ENCODE measurements at regions of chr4 and their contacts with region 1.

Region 1: DNA sequence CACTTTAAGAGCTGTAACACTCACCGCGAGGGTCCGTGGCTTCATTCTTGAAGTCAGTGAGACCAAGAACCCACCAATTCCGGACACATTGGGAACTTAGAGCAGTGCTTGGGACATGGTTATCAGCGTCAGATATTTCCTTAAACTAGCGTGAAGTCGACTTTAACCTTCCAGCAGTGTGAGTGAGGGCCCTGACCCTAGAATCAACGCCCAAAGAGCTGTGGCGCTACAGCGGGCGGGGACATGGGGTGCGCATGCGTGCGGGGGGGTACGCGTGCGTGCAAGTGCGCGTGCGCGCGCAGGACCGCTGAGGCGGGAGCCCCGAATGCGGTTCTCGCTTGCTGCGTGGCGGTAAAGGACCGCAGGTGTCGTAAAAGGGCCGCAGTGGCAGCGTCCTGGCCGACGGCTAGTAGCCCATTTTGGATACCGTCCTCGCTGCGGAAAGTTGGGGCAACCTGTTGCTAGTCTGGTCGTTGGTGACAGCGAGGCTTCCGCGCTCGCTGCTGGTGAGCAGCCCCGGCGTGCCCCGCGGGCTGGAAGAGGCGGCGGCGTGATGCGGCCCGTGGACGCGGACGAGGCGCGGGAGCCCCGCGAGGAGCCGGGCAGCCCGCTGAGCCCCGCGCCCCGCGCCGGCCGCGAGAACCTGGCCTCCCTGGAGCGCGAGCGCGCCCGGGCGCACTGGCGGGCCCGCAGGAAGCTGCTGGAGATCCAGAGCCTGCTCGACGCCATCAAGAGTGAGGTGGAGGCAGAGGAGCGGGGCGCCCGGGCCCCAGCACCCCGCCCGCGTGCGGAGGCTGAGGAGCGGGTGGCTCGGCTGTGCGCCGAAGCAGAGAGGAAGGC is 19.8 kb upstream of the S100P start:
- DNase-seq: peak; percentile 95
- ATAC-seq: peak; percentile 78
- H3K4me3 Mint-ChIP-seq: peak overlapping the region; percentile 94
- H3K27ac Mint-ChIP-seq: peak overlapping the region; percentile 99
- H3K4me1 Mint-ChIP-seq: peaks cover 40% of the 10 kb centered on the region
- H3K27me3 Mint-ChIP-seq: peaks cover 1% of the 10 kb centered on the region

Region 2: DNA sequence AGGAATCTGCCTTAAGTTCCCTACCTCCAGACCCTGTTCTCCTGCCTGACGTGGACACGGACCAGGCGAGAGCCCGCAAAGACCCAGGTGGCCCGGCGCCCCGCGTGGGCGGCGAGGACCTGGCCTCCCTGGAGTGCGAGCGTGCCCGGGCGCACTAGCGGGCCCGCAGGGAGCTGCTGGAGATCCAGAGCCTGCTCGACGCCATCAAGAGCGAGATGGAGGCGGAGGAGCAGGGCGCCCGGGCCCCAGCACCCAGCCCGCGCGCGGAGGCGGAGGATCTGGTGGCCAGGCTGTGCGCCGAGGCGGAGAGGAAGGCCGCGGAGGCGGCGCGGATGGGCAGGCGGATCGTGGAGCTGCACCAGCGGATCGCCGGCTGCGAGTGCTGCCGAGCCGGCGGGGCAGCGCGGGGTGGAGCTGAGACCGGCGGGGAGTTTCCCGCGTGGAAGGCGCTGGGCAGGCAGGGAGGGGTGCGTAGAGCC is 15.2 kb before region 1 on chr4:
- POLR2A ChIA-PET with region 1: interaction called, 35 read pairs
- DNase-seq: peak; percentile 68
- ATAC-seq: peak; percentile 82
- H3K4me3 Mint-ChIP-seq: peak overlapping the region; percentile 68
- H3K27ac Mint-ChIP-seq: no peak overlapping the region
- H3K4me1 Mint-ChIP-seq: peaks cover 6% of the 10 kb centered on the region
- H3K27me3 Mint-ChIP-seq: peaks cover 43% of the 10 kb centered on the region

Region 3: DNA sequence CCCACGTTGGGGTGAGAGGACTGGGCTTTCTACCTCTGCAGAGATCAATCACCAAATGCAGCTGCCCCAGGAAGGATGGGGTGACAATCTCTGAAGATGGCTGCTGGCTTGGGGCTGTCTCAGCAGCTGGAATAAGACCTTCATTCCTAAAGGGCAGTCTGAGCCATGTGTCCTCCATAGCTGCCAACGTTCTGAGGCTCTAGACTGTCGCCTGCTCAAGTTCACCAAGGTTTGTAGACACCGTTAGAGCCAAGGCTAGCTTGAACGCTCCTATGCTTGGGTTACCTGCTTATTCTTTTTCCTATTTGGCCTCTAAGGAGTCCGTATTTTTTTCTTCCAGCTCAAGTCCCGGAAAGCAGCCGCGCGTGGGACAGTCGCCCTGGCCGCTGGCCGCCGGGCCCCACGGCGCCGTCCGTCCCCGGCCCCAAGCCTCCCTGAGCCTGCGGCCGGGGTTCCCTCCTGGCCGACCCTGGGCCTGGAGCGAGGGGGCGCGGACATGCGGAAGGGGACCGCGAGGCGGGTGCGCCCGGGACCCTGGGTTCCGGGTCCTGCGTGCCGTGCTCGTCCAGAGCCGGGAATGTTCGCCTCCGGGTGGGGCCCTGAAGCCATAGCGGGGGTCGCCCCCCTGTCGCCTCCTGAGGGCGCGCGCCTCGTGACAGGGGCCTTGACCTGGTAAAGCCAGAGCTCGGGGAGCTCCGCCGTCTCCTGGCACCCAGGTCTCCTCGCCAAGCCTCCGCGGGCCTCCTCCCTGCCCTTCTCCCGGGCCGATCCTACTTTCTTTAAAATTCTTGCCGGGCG is 10.1 kb before region 1 on chr4:
- POLR2A ChIA-PET with region 1: interaction called, 35 read pairs
- DNase-seq: no peak
- ATAC-seq: peak; percentile 13
- H3K4me3 Mint-ChIP-seq: peak overlapping the region; percentile 63
- H3K27ac Mint-ChIP-seq: no peak overlapping the region
- H3K4me1 Mint-ChIP-seq: peaks cover 3% of the 10 kb centered on the region
- H3K27me3 Mint-ChIP-seq: peaks cover 44% of the 10 kb centered on the region

Region 4: GRCh38 chr4:6688879-6689505 is 15.1 kb after region 1 on chr4:
- POLR2A ChIA-PET with region 1: interaction called, 199 read pairs
- DNase-seq: peak; percentile 82
- ATAC-seq: peak; percentile 77
- H3K4me3 Mint-ChIP-seq: peak overlapping the region; percentile 87
- H3K27ac Mint-ChIP-seq: peak overlapping the region; percentile 92
- H3K4me1 Mint-ChIP-seq: peaks cover 61% of the 10 kb centered on the region
- H3K27me3 Mint-ChIP-seq: no peaks in the 10 kb centered on the region

Region 5: DNA sequence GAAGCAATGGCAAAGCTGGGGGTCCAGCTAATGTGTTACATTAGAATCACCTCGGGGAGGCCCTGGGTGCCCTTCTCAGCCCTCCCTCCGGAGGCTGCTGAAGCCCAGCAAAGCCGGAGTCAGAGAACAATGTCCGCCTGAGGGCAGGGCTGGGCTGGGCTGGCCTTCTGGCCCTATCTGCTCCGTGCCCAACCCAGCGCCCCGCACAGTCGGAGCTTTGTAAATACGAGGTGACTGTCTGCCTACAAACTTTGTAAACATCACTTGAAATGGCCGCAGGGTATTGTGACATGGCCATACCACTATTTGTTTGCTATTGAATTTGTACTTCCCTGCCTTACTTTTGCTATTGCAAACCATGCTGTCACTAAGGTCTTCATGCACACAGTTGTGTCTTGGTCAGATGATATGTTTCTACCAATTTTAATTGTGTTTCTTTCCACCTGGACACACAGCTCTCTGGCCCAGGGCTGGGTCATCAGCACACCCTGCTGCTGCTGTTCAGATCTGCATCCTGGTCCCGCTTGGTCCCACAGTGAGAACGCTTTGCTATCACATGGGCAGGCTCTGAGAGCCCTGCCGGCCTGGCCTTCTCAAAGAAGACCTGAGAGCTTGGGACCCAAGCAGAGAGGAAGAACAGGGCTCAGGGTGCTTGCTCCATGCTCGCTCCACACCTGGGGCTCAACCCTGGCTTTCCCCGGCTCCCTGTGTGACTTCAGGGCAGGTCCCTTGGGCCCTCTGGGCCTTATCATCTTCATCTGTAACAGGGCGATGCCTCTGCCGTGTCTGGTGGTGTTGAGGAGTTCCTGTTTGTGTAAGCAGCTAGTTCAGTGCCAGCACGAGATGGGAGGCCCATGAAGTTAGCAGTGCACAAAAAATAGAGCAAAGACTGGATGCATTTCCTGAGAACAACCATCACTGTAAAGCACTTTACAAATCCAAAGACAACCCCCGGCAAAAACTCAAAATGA is 22.1 kb after region 1 on chr4:
- POLR2A ChIA-PET with region 1: interaction called, 199 read pairs
- DNase-seq: peak; percentile 60
- ATAC-seq: peak; percentile 83
- H3K4me3 Mint-ChIP-seq: peak overlapping the region; percentile 68
- H3K27ac Mint-ChIP-seq: peak overlapping the region; percentile 97
- H3K4me1 Mint-ChIP-seq: peaks cover 56% of the 10 kb centered on the region
- H3K27me3 Mint-ChIP-seq: no peaks in the 10 kb centered on the region

Region 6: DNA sequence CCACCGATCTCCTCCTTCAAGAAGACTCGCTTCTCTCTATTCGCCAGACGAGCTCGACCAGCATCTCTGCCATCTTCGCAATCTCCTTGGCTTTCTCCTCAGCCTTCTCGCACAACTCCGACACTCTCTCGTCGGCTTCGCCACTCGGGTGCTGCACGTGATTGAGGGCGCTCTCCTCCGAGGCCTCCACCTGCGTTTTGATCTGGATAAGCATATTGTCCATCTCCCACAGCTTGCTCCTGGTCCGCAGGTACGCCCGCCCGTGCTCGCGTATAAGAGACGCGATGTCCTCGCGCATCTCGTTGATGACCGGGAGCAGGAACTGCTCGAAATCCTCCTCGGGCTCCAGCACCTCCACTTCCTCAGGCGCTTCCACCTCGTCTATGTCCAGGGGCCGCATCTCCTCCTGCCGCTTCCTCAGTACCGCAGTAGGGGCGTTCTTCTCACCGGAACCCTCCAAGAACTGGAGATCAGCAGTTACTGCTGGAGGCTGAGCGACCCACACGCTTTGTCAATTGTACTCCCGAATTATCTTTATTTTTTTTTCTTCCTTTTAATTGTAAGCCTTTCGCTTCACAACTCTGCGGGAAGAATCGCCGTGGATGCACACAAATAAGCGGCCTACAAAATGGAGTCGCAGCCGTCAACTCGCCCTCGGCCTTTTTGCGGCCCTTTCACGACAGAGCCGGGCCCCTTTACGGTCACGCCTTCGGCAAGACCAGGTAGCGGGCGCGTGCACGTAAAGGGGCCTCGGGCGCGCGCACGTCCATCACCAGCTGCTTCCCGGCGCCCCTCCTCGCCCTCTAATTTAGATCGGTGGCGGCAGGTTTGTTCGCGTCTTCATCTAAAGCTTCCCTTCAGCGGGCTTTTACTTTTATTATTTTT is 35.6 kb after region 1 on chr4 and contains the start of gene MRFAP1L1:
- POLR2A ChIA-PET with region 1: interaction called, 124 read pairs
- DNase-seq: peak; percentile 95
- ATAC-seq: peak; percentile 76
- H3K4me3 Mint-ChIP-seq: peak within 1 kb of the TSS; percentile 97
- H3K27ac Mint-ChIP-seq: peak within 1 kb of the TSS; percentile 99
- H3K4me1 Mint-ChIP-seq: peaks cover 48% of the 10 kb centered on the region
- H3K27me3 Mint-ChIP-seq: peaks cover 4% of the 10 kb centered on the region
- total RNA-seq, gene MRFAP1L1: 74.6 to 80.0 TPM

Region 7: DNA sequence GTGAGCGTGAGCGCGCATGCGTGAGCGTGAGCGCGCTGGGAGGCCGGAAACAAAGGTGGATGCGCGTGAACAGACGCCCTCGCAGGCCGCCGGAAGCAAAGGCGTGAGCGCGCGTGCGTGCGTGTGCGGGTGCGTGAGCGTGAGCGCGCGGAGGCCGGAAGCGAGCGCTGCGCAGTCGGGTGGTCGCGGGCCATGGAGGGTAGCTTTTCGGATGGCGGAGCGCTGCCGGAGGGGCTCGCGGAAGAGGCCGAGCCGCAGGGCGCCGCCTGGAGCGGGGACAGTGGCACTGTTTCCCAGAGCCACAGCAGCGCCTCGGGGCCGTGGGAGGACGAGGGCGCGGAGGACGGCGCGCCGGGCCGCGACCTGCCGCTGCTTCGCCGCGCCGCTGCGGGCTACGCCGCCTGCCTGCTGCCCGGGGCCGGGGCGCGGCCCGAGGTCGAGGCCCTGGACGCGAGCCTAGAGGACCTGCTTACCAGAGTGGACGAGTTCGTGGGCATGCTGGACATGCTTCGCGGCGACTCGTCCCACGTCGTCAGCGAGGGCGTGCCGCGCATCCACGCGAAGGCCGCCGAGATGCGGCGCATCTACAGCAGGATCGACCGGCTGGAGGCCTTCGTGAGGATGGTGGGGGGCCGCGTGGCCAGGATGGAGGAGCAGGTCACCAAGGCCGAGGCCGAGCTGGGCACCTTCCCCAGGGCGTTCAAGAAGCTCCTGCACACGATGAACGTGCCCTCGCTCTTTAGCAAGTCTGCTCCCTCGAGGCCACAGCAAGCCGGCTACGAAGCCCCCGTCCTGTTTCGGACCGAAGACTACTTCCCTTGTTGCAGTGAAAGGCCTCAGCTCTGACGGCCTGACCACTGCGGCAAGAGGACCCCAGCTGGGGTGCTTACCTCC is 42.4 kb after region 1 on chr4 and contains the start of gene BLOC1S4:
- POLR2A ChIA-PET with region 1: interaction called, 124 read pairs
- DNase-seq: peak; percentile 95
- ATAC-seq: peak; percentile 80
- H3K4me3 Mint-ChIP-seq: peak within 1 kb of the TSS; percentile 90
- H3K27ac Mint-ChIP-seq: peak within 1 kb of the TSS; percentile 95
- H3K4me1 Mint-ChIP-seq: peaks cover 25% of the 10 kb centered on the region
- H3K27me3 Mint-ChIP-seq: peaks cover 2% of the 10 kb centered on the region
- total RNA-seq, gene BLOC1S4: 23.9 to 24.3 TPM

Region 8: DNA sequence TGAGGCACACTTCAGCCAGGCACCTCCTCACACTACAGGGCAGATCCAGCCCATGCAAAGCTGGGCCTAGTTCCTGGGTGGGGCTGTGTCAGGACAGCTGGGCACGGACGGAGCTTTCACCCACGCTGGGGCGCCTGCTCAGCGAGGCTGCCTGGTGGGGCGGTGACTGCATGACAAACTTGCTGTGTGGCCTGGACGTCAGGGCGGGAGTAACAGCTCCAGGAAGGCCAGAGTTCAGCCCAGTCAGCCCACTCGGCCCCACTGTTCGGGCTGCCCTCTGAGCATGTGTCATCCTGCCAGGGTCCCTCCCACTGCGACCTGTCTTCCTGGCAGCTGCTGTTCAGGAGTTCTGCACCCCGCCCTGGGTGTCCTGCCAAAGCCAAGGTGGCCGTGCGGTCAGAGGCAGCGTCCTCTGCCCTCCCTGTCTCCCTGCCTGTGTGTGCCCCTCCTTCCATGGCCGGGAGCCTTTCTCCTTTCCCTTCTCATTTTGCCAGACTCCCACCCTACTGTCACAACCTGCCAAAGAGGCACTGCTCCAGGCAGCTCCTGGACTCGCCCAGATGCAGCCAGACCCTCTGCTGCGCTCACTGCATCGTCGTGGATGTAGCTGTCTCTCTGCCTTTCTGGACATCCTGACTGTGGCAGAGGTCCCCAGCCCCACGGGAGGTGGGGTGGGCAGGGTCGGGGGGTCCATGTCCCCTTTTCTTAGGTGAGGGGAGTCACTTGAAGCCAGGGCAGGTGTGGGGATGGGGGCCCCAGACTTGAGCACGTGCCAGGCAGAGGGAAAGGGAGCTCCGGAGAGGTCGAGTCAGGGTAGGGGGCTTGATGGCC is 75.7 kb after region 1 on chr4:
- POLR2A ChIA-PET with region 1: no interaction called
- DNase-seq: no peak
- ATAC-seq: no peak
- H3K4me3 Mint-ChIP-seq: no peak overlapping the region
- H3K27ac Mint-ChIP-seq: no peak overlapping the region
- H3K4me1 Mint-ChIP-seq: peaks cover 9% of the 10 kb centered on the region
- H3K27me3 Mint-ChIP-seq: no peaks in the 10 kb centered on the region

Measured in activated naive CD8-positive, alpha-beta T cell treated with anti-CD3 and anti-CD28 coated beads, Interleukin-2, amount 10 ng/mL, durations not matched to agents 7 days and 5 days (primary cell).